HCT116 (cell line): ENCODE measurements at regions of chr7 and their contacts with region 1.

Region 1: GRCh38 chr7:101985903-101986734 is 168.7 kb downstream of the CUX1 start:
- DNase-seq: no peak
- ATAC-seq: no peak
- H3K4me3 ChIP-seq: no peak overlapping the region
- H3K27ac ChIP-seq: no peak overlapping the region
- H3K4me1 ChIP-seq: peaks cover 15 to 69% of the 10 kb centered on the region in 2 experiments
- H3K27me3 ChIP-seq: no peaks in the 10 kb centered on the region
- CTCF ChIP-seq: no peak
- POLR2A ChIP-seq: no peak
- RAD21 ChIP-seq: no peak

Region 2: GRCh38 chr7:101956130-101956529 is 30.0 kb before region 1 on chr7:
- CTCF ChIA-PET with region 1: no interaction called
- POLR2A ChIA-PET with region 1: no interaction called
- RAD21 ChIA-PET with region 1: no interaction called
- intact Hi-C with region 1: loop called (anchors 1 kb)
- DNase-seq: no peak
- ATAC-seq: no peak
- H3K4me3 ChIP-seq: no peak overlapping the region
- H3K27ac ChIP-seq: no peak overlapping the region
- H3K4me1 ChIP-seq: peaks cover 51 to 75% of the 10 kb centered on the region in 2 experiments
- H3K27me3 ChIP-seq: no peaks in the 10 kb centered on the region
- CTCF ChIP-seq: no peak
- POLR2A ChIP-seq: no peak
- RAD21 ChIP-seq: no peak